CD8-positive, alpha-beta memory T cell (primary cell): ENCODE measurements at regions of chr10 and their contacts with region 1.

Region 1: GRCh38 chr10:22646388-22646853 is 68.0 kb downstream of the PIP4K2A start:
- DNase-seq: peak in 2 of 5 donors; percentile 70 to 80
- H3K4me3 ChIP-seq: peak overlapping the region; percentile 33
- H3K4me3 Mint-ChIP-seq: peak overlapping the region; percentile 28 to 90 (median 87)
- H3K27ac ChIP-seq: peak overlapping the region; percentile 35
- H3K27ac Mint-ChIP-seq: peak overlapping the region; percentile 79 to 99 (median 96)
- H3K4me1 ChIP-seq: peaks cover 98% of the 10 kb centered on the region
- H3K4me1 Mint-ChIP-seq: peaks cover 89 to 95% (median 94%) of the 10 kb centered on the region in 3 donors
- H3K27me3 ChIP-seq: no peaks in the 10 kb centered on the region
- H3K27me3 Mint-ChIP-seq: no peaks in the 10 kb centered on the region

Region 2: GRCh38 chr10:22369434-22370072 is 276.9 kb before region 1 on chr10:
- CTCF ChIA-PET with region 1: no interaction called
- POLR2A ChIA-PET with region 1: no interaction called
- DNase-seq: no peak
- H3K4me3 ChIP-seq: no peak overlapping the region
- H3K4me3 Mint-ChIP-seq: no peak overlapping the region
- H3K27ac ChIP-seq: no peak overlapping the region
- H3K27ac Mint-ChIP-seq: no peak overlapping the region
- H3K4me1 ChIP-seq: peaks cover 3% of the 10 kb centered on the region
- H3K4me1 Mint-ChIP-seq: peaks cover 6 to 27% (median 18%) of the 10 kb centered on the region in 3 donors
- H3K27me3 ChIP-seq: no peaks in the 10 kb centered on the region
- H3K27me3 Mint-ChIP-seq: peaks cover 3 to 17% of the 10 kb centered on the region in 2 donors

Region 3: GRCh38 chr10:22630234-22631174 is 15.9 kb before region 1 on chr10:
- CTCF ChIA-PET with region 1: interaction called, 6 read pairs
- POLR2A ChIA-PET with region 1: interaction called, 11 read pairs
- DNase-seq: peak in 4 of 5 donors; percentile 36 to 71 (median 62)
- H3K4me3 ChIP-seq: peak overlapping the region; percentile 19
- H3K4me3 Mint-ChIP-seq: peak overlapping the region; percentile 13 to 85 (median 82)
- H3K27ac ChIP-seq: peak overlapping the region; percentile 75
- H3K27ac Mint-ChIP-seq: peak overlapping the region; percentile 86 to 99 (median 98)
- H3K4me1 ChIP-seq: peaks cover 99% of the 10 kb centered on the region
- H3K4me1 Mint-ChIP-seq: peaks cover 95 to 99% (median 98%) of the 10 kb centered on the region in 3 donors
- H3K27me3 ChIP-seq: no peaks in the 10 kb centered on the region
- H3K27me3 Mint-ChIP-seq: no peaks in the 10 kb centered on the region

Region 4: DNA sequence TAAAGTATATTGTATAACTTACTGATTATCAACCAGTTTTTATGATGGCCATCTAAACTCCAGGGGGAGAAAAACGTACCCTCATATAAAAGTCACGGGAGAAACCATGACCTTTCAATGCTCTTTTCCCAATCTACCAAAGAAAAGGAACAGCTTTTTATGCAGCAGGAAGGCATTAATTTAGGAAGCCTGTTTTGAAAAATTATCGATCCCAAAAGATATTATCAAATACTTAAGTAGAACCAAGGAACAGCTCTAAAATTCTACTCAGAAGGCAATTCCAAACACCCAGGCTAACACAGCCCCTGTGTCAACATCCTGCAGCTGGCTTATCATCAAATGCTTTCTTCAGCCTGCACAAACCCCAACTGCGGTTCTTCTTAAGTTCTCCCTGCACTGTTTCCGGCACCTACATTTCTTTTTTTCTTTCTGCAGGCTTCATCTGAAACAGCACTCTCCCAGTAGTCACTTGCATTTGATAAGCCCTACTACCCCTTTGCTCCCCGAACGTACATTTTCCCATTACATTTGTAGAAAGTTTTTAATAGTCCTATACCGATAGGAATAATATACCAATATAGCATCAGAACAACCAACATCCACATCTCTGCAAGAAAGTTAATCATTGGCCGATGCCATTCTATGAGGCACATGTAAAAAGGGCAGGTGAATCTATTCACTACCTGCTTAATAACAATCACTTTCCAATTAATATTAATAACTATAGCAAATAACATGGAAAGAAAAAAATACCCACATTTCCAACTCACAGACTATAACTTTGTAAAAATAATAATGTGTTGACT is 20.1 kb after region 1 on chr10:
- CTCF ChIA-PET with region 1: interaction called, 7 read pairs
- POLR2A ChIA-PET with region 1: interaction called, 20 read pairs
- DNase-seq: peak; percentile 49 to 87 (median 81)
- H3K4me3 ChIP-seq: peak overlapping the region; percentile 49
- H3K4me3 Mint-ChIP-seq: peak overlapping the region; percentile 79 to 91 (median 84)
- H3K27ac ChIP-seq: peak overlapping the region; percentile 33
- H3K27ac Mint-ChIP-seq: peak overlapping the region; percentile 66 to 99 (median 90)
- H3K4me1 ChIP-seq: peaks cover 93% of the 10 kb centered on the region
- H3K4me1 Mint-ChIP-seq: peaks cover 83 to 100% (median 99%) of the 10 kb centered on the region in 3 donors
- H3K27me3 ChIP-seq: no peaks in the 10 kb centered on the region
- H3K27me3 Mint-ChIP-seq: no peaks in the 10 kb centered on the region

Region 5: GRCh38 chr10:22780474-22780885 is 134.1 kb after region 1 on chr10:
- CTCF ChIA-PET with region 1: no interaction called
- POLR2A ChIA-PET with region 1: no interaction called
- DNase-seq: no peak
- H3K4me3 ChIP-seq: no peak overlapping the region
- H3K4me3 Mint-ChIP-seq: no peak overlapping the region
- H3K27ac ChIP-seq: no peak overlapping the region
- H3K27ac Mint-ChIP-seq: no peak overlapping the region
- H3K4me1 ChIP-seq: no peaks in the 10 kb centered on the region
- H3K4me1 Mint-ChIP-seq: peaks cover 0 to 4% (median 2%) of the 10 kb centered on the region in 3 donors
- H3K27me3 ChIP-seq: no peaks in the 10 kb centered on the region
- H3K27me3 Mint-ChIP-seq: peaks cover 0 to 1% of the 10 kb centered on the region in 2 donors